ENCODE measurements at regions of chr13 and their contacts with region 1.

Region 1: GRCh38 chr13:74114202-74114601 is 20.0 kb downstream of the KLF12 start:
- DNase-seq: no peak
- H3K4me3 ChIP-seq: no peak overlapping the region
- H3K27ac ChIP-seq: no peak overlapping the region
- H3K4me1 ChIP-seq: peaks cover 0 to 15% (median 13%) of the 10 kb centered on the region in 4 donors
- H3K27me3 ChIP-seq: no peaks in the 10 kb centered on the region
- CTCF ChIP-seq: no peak
- EP300 ChIP-seq: no peak
- POLR2A ChIP-seq: no peak

Region 2: GRCh38 chr13:73998631-73999030 is 115.6 kb before region 1 on chr13:
- intact Hi-C with region 1: no loop called
- DNase-seq: no peak
- H3K4me3 ChIP-seq: no peak overlapping the region
- H3K27ac ChIP-seq: no peak overlapping the region
- H3K4me1 ChIP-seq: peaks cover 0 to 17% (median 3%) of the 10 kb centered on the region in 4 donors
- H3K27me3 ChIP-seq: no peaks in the 10 kb centered on the region
- CTCF ChIP-seq: no peak
- EP300 ChIP-seq: no peak
- POLR2A ChIP-seq: no peak

Region 3: DNA sequence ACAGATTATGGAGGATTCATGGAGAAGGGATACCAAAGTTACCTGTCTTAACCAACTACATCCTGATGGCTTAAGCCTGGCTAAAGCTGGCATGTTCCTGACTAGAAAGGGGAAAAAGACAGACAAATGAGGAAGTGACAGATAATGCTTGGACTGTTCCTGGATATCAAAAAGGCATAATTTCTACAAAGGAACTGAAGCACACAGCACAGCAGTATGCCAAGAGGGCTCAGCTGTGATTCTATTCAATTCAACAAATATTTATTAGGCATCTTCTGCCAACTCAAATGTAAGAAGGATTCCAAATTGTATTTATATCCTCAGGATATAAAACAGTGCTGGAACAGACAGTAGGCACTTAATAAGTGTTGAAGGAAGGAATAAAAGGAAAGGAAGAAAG is 39.5 kb before region 1 on chr13:
- intact Hi-C with region 1: loop called (anchors 5 kb)
- DNase-seq: no peak
- H3K4me3 ChIP-seq: no peak overlapping the region
- H3K27ac ChIP-seq: peak overlapping the region in 2 of 4 donors; percentile 1 to 20
- H3K4me1 ChIP-seq: peaks cover 0 to 58% (median 35%) of the 10 kb centered on the region in 4 donors
- H3K27me3 ChIP-seq: no peaks in the 10 kb centered on the region
- CTCF ChIP-seq: no peak
- EP300 ChIP-seq: no peak
- POLR2A ChIP-seq: no peak

Region 4: GRCh38 chr13:74133657-74134201 is 19.5 kb after region 1 on chr13:
- intact Hi-C with region 1: no loop called
- DNase-seq: peak; percentile 95
- H3K4me3 ChIP-seq: peak overlapping the region; percentile 61 to 97 (median 82)
- H3K27ac ChIP-seq: peak overlapping the region; percentile 87 to 98 (median 96)
- H3K4me1 ChIP-seq: peaks cover 0 to 41% (median 22%) of the 10 kb centered on the region in 4 donors
- H3K27me3 ChIP-seq: no peaks in the 10 kb centered on the region
- CTCF ChIP-seq: no peak
- EP300 ChIP-seq: no peak
- POLR2A ChIP-seq: peak in 1 of 2 donors; percentile 53

Region 5: GRCh38 chr13:74145249-74145975 is 31.2 kb after region 1 on chr13:
- intact Hi-C with region 1: no loop called
- DNase-seq: no peak
- H3K4me3 ChIP-seq: no peak overlapping the region
- H3K27ac ChIP-seq: no peak overlapping the region
- H3K4me1 ChIP-seq: peaks cover 0 to 14% (median 0%) of the 10 kb centered on the region in 4 donors
- H3K27me3 ChIP-seq: no peaks in the 10 kb centered on the region
- CTCF ChIP-seq: no peak
- EP300 ChIP-seq: no peak
- POLR2A ChIP-seq: no peak